WTC11 (cell line): ENCODE measurements at regions of chr5 and their contacts with region 1.

Region 1: GRCh38 chr5:168291464-168291961 is at the start of gene WWC1:
- DNase-seq: peak; percentile 90
- ATAC-seq: peak; percentile 75
- H3K4me3 Mint-ChIP-seq: peak within 1 kb of the TSS; percentile 89
- H3K27ac Mint-ChIP-seq: peak within 1 kb of the TSS; percentile 92
- H3K4me1 Mint-ChIP-seq: peaks cover 64% of the 10 kb centered on the region
- H3K27me3 Mint-ChIP-seq: peaks cover 15% of the 10 kb centered on the region
- CTCF ChIP-seq: no peak
- total RNA-seq, gene WWC1: 29.1 to 48.4 TPM (median 31.6 TPM) in 3 replicates

Region 2: DNA sequence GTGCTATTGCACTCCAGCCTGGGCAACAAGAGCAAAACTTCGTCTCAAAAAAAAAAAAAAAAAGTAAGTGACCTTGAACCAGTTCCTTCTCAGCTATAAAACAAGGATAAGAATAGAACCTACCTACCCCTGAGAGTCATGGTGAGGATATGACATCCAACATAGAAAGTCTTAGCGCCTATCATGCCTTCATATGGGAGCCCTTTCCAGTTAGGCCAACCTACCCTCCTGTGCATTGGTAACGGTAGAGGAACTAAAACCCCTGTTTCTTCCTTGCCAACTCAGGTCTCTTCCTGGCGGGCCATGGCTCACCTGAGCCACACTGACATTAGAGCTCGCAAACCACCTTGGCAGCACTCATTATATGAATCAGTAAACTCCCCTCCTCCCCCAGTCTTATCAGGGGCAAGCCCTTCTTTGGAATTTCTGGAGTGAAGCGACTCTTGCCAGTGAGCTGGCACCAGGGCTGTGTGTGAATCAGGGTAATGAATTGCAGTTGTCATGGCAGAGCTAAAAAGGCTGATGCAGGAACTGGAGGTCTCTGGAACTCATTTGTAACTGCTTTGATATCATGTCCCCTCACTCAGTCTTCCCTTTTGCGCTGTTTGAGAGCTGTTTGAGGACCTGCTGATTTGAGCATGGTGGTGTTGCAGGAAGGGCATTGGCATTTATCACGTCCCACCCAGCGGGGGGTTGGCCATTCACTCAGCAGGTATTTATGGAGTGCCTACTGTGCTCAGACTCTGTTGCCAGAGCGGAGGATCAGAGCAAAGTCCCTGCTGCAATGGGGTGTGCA is 10.3 kb after region 1 on chr5:
- CTCF ChIA-PET with region 1: interaction called, 21 read pairs
- POLR2A ChIA-PET with region 1: interaction called, 6 read pairs
- DNase-seq: no peak
- ATAC-seq: no peak
- H3K4me3 Mint-ChIP-seq: no peak overlapping the region
- H3K27ac Mint-ChIP-seq: peak overlapping the region; percentile 22; the same call in 1 of the 2 replicates
- H3K4me1 Mint-ChIP-seq: peaks cover 59% of the 10 kb centered on the region
- H3K27me3 Mint-ChIP-seq: peaks cover 2% of the 10 kb centered on the region
- CTCF ChIP-seq: no peak

Region 3: DNA sequence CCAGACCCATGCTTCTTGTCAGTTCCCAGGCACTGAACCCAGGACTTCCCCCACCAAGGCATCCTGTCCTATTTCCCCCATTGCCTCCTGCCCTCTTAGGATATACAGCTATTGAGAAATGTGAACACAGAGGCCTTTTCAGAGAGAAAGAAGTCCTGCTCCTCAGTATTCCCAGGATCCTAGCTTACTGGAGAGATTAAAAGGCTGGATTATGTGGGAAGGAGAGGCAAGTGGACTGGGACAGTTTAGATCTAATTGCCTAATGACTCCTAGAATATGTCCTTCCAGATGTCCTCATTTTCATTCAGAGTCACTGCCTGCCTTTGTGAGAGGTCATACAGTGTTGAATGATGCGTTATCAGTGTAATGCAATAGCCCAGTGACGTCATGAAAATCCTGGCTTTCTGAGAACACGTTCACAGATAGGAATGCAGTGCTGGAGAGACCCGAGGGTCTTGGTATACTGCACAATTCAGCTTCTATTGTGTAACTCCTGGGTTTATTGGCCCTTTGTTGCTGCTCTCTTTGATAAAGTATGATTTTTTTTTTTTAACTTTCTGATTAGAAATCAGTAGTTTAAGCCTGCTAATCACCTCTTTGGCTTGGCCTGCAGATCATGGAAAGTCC is 26.1 kb after region 1 on chr5:
- CTCF ChIA-PET with region 1: interaction called, 48 read pairs
- POLR2A ChIA-PET with region 1: interaction called, 5 read pairs
- DNase-seq: no peak
- ATAC-seq: no peak
- H3K4me3 Mint-ChIP-seq: no peak overlapping the region
- H3K27ac Mint-ChIP-seq: no peak overlapping the region
- H3K4me1 Mint-ChIP-seq: peaks cover 48% of the 10 kb centered on the region
- H3K27me3 Mint-ChIP-seq: no peaks in the 10 kb centered on the region; the same call in 1 of the 2 replicates
- CTCF ChIP-seq: no peak

Region 4: DNA sequence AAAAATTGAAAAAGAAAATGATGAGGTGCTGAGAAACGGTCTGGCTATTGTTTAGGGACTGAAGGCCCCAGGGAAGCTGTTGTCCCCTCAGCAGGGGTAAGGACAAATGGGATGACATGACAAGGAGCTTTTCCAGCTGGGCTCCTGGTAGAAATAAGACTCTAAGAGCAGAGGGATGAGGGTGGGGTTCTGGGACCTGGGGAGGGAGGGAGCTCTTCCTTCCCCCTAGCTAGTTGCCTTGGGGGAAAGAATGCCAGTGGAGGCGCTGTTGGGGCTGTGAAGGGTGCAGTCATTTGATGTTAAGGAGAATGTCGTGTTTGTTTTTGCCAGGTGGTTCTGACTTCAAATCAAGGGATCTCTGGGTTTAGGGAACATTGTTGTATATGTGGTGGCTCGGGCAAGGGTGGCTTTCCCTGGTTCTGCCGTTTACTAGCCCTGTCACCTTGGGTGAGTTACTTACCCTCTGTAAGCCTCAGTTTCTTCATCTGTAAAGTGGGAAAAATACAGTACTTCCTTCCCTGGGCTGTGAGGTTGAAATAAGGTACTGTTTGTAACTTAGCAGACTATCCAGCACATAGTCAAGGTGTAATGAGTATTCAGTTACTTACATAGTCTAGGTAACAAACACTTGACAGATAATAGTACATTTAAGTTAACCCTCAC is 47.7 kb after region 1 on chr5:
- CTCF ChIA-PET with region 1: interaction called, 21 read pairs
- POLR2A ChIA-PET with region 1: interaction called, 6 read pairs
- DNase-seq: peak; percentile 62
- ATAC-seq: peak; percentile 64
- H3K4me3 Mint-ChIP-seq: no peak overlapping the region
- H3K27ac Mint-ChIP-seq: peak overlapping the region; percentile 14; the same call in 1 of the 2 replicates
- H3K4me1 Mint-ChIP-seq: peaks cover 62% of the 10 kb centered on the region
- H3K27me3 Mint-ChIP-seq: no peaks in the 10 kb centered on the region
- CTCF ChIP-seq: no peak

Region 5: GRCh38 chr5:168409580-168410458 is 118.3 kb after region 1 on chr5:
- CTCF ChIA-PET with region 1: no interaction called
- POLR2A ChIA-PET with region 1: no interaction called
- DNase-seq: no peak
- ATAC-seq: no peak
- H3K4me3 Mint-ChIP-seq: no peak overlapping the region
- H3K27ac Mint-ChIP-seq: peak overlapping the region; percentile 54; the same call in 1 of the 2 replicates
- H3K4me1 Mint-ChIP-seq: no peaks in the 10 kb centered on the region
- H3K27me3 Mint-ChIP-seq: no peaks in the 10 kb centered on the region
- CTCF ChIP-seq: no peak

Region 6: GRCh38 chr5:168422431-168422830 is 130.9 kb after region 1 on chr5:
- CTCF ChIA-PET with region 1: interaction called, 10 read pairs
- POLR2A ChIA-PET with region 1: no interaction called
- DNase-seq: no peak
- ATAC-seq: peak; percentile 84
- H3K4me3 Mint-ChIP-seq: no peak overlapping the region
- H3K27ac Mint-ChIP-seq: no peak overlapping the region
- H3K4me1 Mint-ChIP-seq: no peaks in the 10 kb centered on the region
- H3K27me3 Mint-ChIP-seq: no peaks in the 10 kb centered on the region
- CTCF ChIP-seq: no peak